HAP-1 (cell line): ENCODE measurements at regions of chr1 and their contacts with region 1.

Region 1: GRCh38 chr1:119948342-119949214 is 52.3 kb upstream of the ADAM30 start:
- DNase-seq: peak; percentile 68 to 84
- H3K4me3 ChIP-seq: no peak overlapping the region
- H3K4me1 ChIP-seq: no peaks in the 10 kb centered on the region
- H3K27me3 ChIP-seq: no peaks in the 10 kb centered on the region

Region 2: GRCh38 chr1:119895986-119896702 is 52.4 kb before region 1 on chr1 and contains the start of gene ADAM30:
- in situ Hi-C with region 1: loop called (anchors 10 kb)
- DNase-seq: no peak
- H3K4me3 ChIP-seq: no peak within 1 kb of the TSS
- H3K4me1 ChIP-seq: peaks cover 8% of the 10 kb centered on the region
- H3K27me3 ChIP-seq: no peaks in the 10 kb centered on the region